Activated CD4-positive, alpha-beta T cell treated with anti-CD3 and anti-CD28 coated beads, Interleukin-2, amount 10 ng/mL, durations not matched to agents 24 days and 14 days (primary cell): ENCODE measurements at regions of chr6 and their contacts with region 1.

Region 1: GRCh38 chr6:142845624-142846458 is 99.1 kb downstream of the HIVEP2 start:
- DNase-seq: peak; percentile 86
- H3K4me3 Mint-ChIP-seq: peak overlapping the region; percentile 78
- H3K27ac Mint-ChIP-seq: peak overlapping the region; percentile 82
- H3K4me1 Mint-ChIP-seq: peaks cover 77% of the 10 kb centered on the region
- H3K27me3 Mint-ChIP-seq: no peaks in the 10 kb centered on the region

Region 2: GRCh38 chr6:142395768-142396231 is 450.0 kb before region 1 on chr6:
- intact Hi-C with region 1: loop called (anchors 10 kb)
- DNase-seq: peak; percentile 77
- H3K4me3 Mint-ChIP-seq: peak overlapping the region; percentile 36
- H3K27ac Mint-ChIP-seq: peak overlapping the region; percentile 8
- H3K4me1 Mint-ChIP-seq: peaks cover 13% of the 10 kb centered on the region
- H3K27me3 Mint-ChIP-seq: peaks cover 48% of the 10 kb centered on the region

Region 3: GRCh38 chr6:142653710-142654420 is 192.0 kb before region 1 on chr6:
- intact Hi-C with region 1: no loop called
- DNase-seq: peak; percentile 37
- H3K4me3 Mint-ChIP-seq: no peak overlapping the region
- H3K27ac Mint-ChIP-seq: no peak overlapping the region
- H3K4me1 Mint-ChIP-seq: no peaks in the 10 kb centered on the region
- H3K27me3 Mint-ChIP-seq: peaks cover 2% of the 10 kb centered on the region

Region 4: GRCh38 chr6:142810952-142811514 is 34.8 kb before region 1 on chr6:
- intact Hi-C with region 1: loop called (anchors 1 kb)
- DNase-seq: peak; percentile 73
- H3K4me3 Mint-ChIP-seq: peak overlapping the region; percentile 35
- H3K27ac Mint-ChIP-seq: peak overlapping the region; percentile 65
- H3K4me1 Mint-ChIP-seq: peaks cover 47% of the 10 kb centered on the region
- H3K27me3 Mint-ChIP-seq: no peaks in the 10 kb centered on the region

Region 5: GRCh38 chr6:142857233-142857761 is 11.5 kb after region 1 on chr6:
- intact Hi-C with region 1: loop called (anchors 2 kb)
- DNase-seq: peak; percentile 78
- H3K4me3 Mint-ChIP-seq: peak overlapping the region; percentile 83
- H3K27ac Mint-ChIP-seq: peak overlapping the region; percentile 97
- H3K4me1 Mint-ChIP-seq: peaks cover 81% of the 10 kb centered on the region
- H3K27me3 Mint-ChIP-seq: no peaks in the 10 kb centered on the region

Region 6: GRCh38 chr6:142885182-142885867 is 39.5 kb after region 1 on chr6:
- intact Hi-C with region 1: loop called (anchors 1 kb)
- DNase-seq: peak; percentile 86
- H3K4me3 Mint-ChIP-seq: peak overlapping the region; percentile 92
- H3K27ac Mint-ChIP-seq: peak overlapping the region; percentile 99
- H3K4me1 Mint-ChIP-seq: peaks cover 63% of the 10 kb centered on the region
- H3K27me3 Mint-ChIP-seq: no peaks in the 10 kb centered on the region

Region 7: GRCh38 chr6:142913511-142914047 is 67.7 kb after region 1 on chr6:
- intact Hi-C with region 1: loop called (anchors 1 kb)
- DNase-seq: peak; percentile 92
- H3K4me3 Mint-ChIP-seq: peak overlapping the region; percentile 82
- H3K27ac Mint-ChIP-seq: peak overlapping the region; percentile 94
- H3K4me1 Mint-ChIP-seq: peaks cover 62% of the 10 kb centered on the region
- H3K27me3 Mint-ChIP-seq: no peaks in the 10 kb centered on the region

Region 8: GRCh38 chr6:143000811-143001210 is 155.0 kb after region 1 on chr6:
- intact Hi-C with region 1: no loop called
- DNase-seq: no peak
- H3K4me3 Mint-ChIP-seq: no peak overlapping the region
- H3K27ac Mint-ChIP-seq: no peak overlapping the region
- H3K4me1 Mint-ChIP-seq: no peaks in the 10 kb centered on the region
- H3K27me3 Mint-ChIP-seq: peaks cover 6% of the 10 kb centered on the region

Region 9: DNA sequence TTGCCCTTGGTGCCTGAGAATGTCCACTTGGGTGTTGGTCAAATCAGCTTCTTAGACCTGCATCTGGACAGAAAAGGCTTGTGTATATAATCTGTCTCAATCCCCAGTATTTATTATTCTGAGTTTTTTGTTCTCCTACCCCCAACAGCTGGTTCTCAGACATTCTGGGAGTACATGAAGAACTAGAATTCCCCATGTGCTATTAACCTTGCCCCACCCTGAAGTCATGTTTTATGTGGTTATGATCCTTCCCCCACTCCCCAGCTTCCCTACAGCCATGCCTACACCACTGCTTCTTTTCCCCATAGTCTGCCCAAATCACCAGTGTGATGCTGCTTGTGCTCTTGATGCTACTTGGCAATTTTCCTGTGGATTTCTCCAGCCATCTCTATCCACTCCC is 447.7 kb after region 1 on chr6:
- intact Hi-C with region 1: no loop called
- DNase-seq: no peak
- H3K4me3 Mint-ChIP-seq: no peak overlapping the region
- H3K27ac Mint-ChIP-seq: no peak overlapping the region
- H3K4me1 Mint-ChIP-seq: no peaks in the 10 kb centered on the region
- H3K27me3 Mint-ChIP-seq: no peaks in the 10 kb centered on the region

Region 10: DNA sequence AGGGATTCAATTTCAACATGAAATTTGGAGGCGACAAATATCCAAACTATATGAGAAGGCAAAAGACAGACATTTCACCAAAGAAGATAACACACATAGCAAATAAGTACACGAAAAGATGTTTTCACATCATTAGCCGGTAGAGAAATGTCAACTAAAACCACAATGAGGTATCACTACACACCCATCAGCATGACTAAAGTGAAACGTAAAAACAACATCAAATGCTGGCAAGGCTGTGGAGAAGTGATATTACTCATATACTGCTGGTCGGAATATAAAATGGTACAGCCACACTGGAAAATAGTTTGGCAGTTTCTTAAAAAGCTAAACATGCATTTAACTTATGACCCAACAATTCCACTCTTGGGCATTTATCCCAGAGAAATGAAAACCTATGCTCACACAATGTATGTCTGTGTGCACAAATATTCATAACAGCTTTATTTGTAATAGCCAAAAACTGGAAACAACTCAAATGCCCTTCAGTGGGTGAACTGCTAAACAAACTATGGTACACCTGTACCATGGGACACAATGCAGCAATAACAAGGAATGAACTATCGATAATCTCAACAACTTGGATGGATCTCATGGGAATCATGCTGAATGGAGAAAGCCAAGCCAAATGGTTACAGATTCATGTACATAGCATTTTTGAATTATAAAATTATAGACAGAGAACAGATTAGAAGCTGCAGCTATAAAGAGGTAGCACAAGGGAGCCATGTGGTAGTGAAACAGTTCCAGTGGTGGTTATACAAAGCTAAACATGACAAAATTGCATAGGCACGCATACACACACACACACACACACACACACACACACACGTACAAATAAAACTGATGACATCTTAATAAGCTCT is 596.1 kb after region 1 on chr6:
- intact Hi-C with region 1: loop called (anchors 5 kb)
- DNase-seq: peak; percentile 77
- H3K4me3 Mint-ChIP-seq: peak overlapping the region; percentile 47
- H3K27ac Mint-ChIP-seq: peak overlapping the region; percentile 95
- H3K4me1 Mint-ChIP-seq: peaks cover 49% of the 10 kb centered on the region
- H3K27me3 Mint-ChIP-seq: no peaks in the 10 kb centered on the region